ENCODE measurements at regions of chr4 and their contacts with region 1.

Region 1: DNA sequence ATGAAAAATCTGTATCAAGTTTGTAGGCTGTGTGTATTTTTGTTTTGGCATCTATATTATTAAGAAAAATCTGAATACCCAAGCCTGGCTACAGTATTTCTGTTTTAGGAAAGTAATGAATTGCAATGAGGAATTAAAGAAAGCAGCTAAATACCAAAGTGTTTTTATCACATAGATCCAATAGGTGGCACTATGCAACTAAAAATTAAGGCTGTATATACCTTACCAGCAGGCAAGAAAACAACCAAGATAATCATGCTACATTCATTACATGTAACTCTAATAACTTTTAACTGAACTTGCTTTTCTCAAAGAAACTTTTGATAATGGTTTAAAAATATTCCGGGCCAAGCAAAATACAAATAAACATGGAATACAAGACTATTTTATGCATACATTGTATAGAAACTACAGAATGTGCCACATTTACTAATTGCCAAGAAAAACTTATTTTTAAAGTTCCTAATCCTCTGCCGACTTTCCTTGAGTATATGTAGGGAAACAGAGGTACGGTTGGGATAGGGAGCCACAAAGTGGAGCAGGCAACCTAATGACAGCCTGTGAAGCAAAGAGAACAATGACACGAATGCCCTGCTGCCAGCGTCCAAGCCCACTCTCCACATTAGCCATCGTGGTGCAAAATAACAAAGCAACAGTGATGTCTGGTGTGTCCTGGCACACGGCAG is 63.7 kb downstream of the SEC24D start:
- DNase-seq: peak in 2 of 9 experiments; percentile 51 to 64
- ATAC-seq: peak; percentile 71
- H3K4me3 ChIP-seq: no peak overlapping the region
- H3K4me3 Mint-ChIP-seq: no peak overlapping the region
- H3K27ac ChIP-seq: no peak overlapping the region
- H3K27ac Mint-ChIP-seq: no peak overlapping the region
- H3K4me1 ChIP-seq: no peaks in the 10 kb centered on the region
- H3K4me1 Mint-ChIP-seq: no peaks in the 10 kb centered on the region
- H3K27me3 ChIP-seq: no peaks in the 10 kb centered on the region
- H3K27me3 Mint-ChIP-seq: no peaks in the 10 kb centered on the region
- CTCF ChIP-seq: peak; percentile 79

Region 2: GRCh38 chr4:118888666-118889311 is 116.6 kb after region 1 on chr4 and contains the start of gene SYNPO2:
- CTCF ChIA-PET with region 1: interaction called, 41 read pairs
- POLR2A ChIA-PET with region 1: no interaction called
- intact Hi-C with region 1: loop called (anchors 1 kb)
- DNase-seq: peak in 6 of 9 experiments; percentile 3 to 54 (median 22)
- ATAC-seq: peak; percentile 51
- H3K4me3 ChIP-seq: peak within 1 kb of the TSS; percentile 35 to 43
- H3K4me3 Mint-ChIP-seq: peak within 1 kb of the TSS; percentile 74
- H3K27ac ChIP-seq: no peak within 1 kb of the TSS
- H3K27ac Mint-ChIP-seq: no peak within 1 kb of the TSS
- H3K4me1 ChIP-seq: peaks cover 12% of the 10 kb centered on the region
- H3K4me1 Mint-ChIP-seq: peaks cover 16% of the 10 kb centered on the region
- H3K27me3 ChIP-seq: peaks cover 8 to 12% of the 10 kb centered on the region in 2 experiments
- H3K27me3 Mint-ChIP-seq: peaks cover 28% of the 10 kb centered on the region
- CTCF ChIP-seq: no peak
- total RNA-seq, gene SYNPO2: 0.24 to 0.25 TPM

Region 3: GRCh38 chr4:118981839-118982381 is 209.7 kb after region 1 on chr4:
- CTCF ChIA-PET with region 1: no interaction called
- POLR2A ChIA-PET with region 1: no interaction called
- intact Hi-C with region 1: loop called in 1 of 2 experiments (anchors 5 kb)
- DNase-seq: peak; percentile 16 to 61 (median 50)
- ATAC-seq: peak; percentile 81
- H3K4me3 ChIP-seq: no peak overlapping the region
- H3K4me3 Mint-ChIP-seq: no peak overlapping the region
- H3K27ac ChIP-seq: no peak overlapping the region
- H3K27ac Mint-ChIP-seq: no peak overlapping the region
- H3K4me1 ChIP-seq: no peaks in the 10 kb centered on the region
- H3K4me1 Mint-ChIP-seq: peaks cover 2% of the 10 kb centered on the region
- H3K27me3 ChIP-seq: no peaks in the 10 kb centered on the region
- H3K27me3 Mint-ChIP-seq: peaks cover 5% of the 10 kb centered on the region
- CTCF ChIP-seq: peak; percentile 75

Region 4: DNA sequence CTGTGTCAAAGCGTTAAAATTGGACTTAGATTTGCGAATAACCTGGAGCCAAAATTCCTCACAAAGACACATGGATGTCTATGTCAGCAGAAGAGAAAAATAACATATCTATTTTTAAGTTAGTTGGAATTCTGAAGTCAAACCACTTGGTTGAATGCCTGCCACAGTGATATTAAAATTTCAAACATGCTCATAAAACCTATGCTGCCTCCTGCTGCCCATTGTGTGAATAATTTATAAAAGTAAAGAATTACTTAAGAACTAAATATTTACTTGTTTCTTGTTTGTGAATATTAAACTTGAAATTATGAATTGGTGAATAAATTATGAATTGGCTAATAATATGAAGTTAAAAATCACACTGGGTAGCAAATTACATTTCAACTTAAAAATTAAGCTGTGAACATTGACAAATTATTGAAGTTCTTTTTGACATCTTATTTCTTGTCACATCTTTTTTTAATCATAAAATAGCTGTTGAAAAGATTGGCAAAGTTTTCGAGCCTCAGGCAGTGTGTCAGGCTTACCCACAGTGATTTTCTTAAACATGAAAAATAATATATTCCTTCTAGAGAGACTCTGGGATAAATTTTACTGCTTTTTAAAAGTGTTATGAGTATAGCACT is 514.3 kb after region 1 on chr4:
- CTCF ChIA-PET with region 1: no interaction called
- POLR2A ChIA-PET with region 1: no interaction called
- intact Hi-C with region 1: loop called in 1 of 2 experiments (anchors 5 kb)
- DNase-seq: peak in 5 of 9 experiments; percentile 21 to 69 (median 34)
- ATAC-seq: peak; percentile 55
- H3K4me3 ChIP-seq: no peak overlapping the region
- H3K4me3 Mint-ChIP-seq: no peak overlapping the region
- H3K27ac ChIP-seq: no peak overlapping the region
- H3K27ac Mint-ChIP-seq: no peak overlapping the region
- H3K4me1 ChIP-seq: peaks cover 3% of the 10 kb centered on the region
- H3K4me1 Mint-ChIP-seq: peaks cover 30% of the 10 kb centered on the region
- H3K27me3 ChIP-seq: no peaks in the 10 kb centered on the region
- H3K27me3 Mint-ChIP-seq: no peaks in the 10 kb centered on the region
- CTCF ChIP-seq: peak; percentile 81

Measured in CD8-positive, alpha-beta T cell (primary cell).